Aorta (tissue), 5 donors: ENCODE measurements at regions of chr20 and their contacts with region 1.

Region 1: DNA sequence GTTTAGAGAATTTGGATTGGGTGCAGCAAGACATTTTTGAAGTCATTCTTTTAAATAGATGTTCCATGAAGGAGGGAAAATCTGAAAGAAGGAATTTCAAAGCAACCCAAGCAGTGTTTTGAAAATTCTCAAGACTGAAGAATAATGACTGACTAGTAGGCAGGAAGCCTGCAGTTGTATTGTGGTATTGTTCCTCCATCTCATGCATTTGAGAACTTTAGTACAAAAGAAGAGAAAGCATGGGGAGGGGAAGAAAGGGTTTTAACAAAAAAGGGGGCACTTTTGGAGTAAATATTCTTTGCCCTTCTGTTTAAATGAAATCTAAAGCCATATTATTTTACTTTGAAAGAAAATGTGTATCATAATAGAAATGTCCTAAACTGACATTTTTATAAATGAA is 6.6 kb downstream of the NCOA3 start:
- DNase-seq: no peak
- ATAC-seq: no peak
- H3K4me3 ChIP-seq: no peak overlapping the region
- H3K27ac ChIP-seq: no peak overlapping the region
- H3K4me1 ChIP-seq: peaks cover 0 to 2% of the 10 kb centered on the region in 2 donors
- H3K27me3 ChIP-seq: no peaks in the 10 kb centered on the region

Region 2: GRCh38 chr20:47574616-47575364 is 66.5 kb after region 1 on chr20:
- intact Hi-C with region 1: loop called (anchors 5 to 10 kb)
- DNase-seq: no peak
- ATAC-seq: no peak
- H3K4me3 ChIP-seq: no peak overlapping the region
- H3K27ac ChIP-seq: no peak overlapping the region
- H3K4me1 ChIP-seq: peaks cover 0 to 3% of the 10 kb centered on the region in 2 donors
- H3K27me3 ChIP-seq: no peaks in the 10 kb centered on the region

Region 3: GRCh38 chr20:47821481-47822439 is 313.5 kb after region 1 on chr20:
- intact Hi-C with region 1: no loop called
- DNase-seq: no peak
- ATAC-seq: no peak
- H3K4me3 ChIP-seq: no peak overlapping the region
- H3K27ac ChIP-seq: no peak overlapping the region
- H3K4me1 ChIP-seq: no peaks in the 10 kb centered on the region
- H3K27me3 ChIP-seq: no peaks in the 10 kb centered on the region